ENCODE measurements at regions of chr12 and their contacts with region 1.

Region 1: GRCh38 chr12:64431791-64432190 is 20.1 kb upstream of the TBK1 start:
- DNase-seq: no peak
- ATAC-seq: no peak
- H3K4me3 ChIP-seq: no peak overlapping the region
- H3K27ac ChIP-seq: no peak overlapping the region
- H3K4me1 ChIP-seq: no peaks in the 10 kb centered on the region
- H3K27me3 ChIP-seq: no peaks in the 10 kb centered on the region
- CTCF ChIP-seq: no peak

Region 2: GRCh38 chr12:64373193-64373592 is 58.6 kb before region 1 on chr12:
- intact Hi-C with region 1: no loop called
- DNase-seq: no peak
- ATAC-seq: no peak
- H3K4me3 ChIP-seq: no peak overlapping the region
- H3K27ac ChIP-seq: no peak overlapping the region
- H3K4me1 ChIP-seq: no peaks in the 10 kb centered on the region
- H3K27me3 ChIP-seq: no peaks in the 10 kb centered on the region
- CTCF ChIP-seq: no peak

Region 3: DNA sequence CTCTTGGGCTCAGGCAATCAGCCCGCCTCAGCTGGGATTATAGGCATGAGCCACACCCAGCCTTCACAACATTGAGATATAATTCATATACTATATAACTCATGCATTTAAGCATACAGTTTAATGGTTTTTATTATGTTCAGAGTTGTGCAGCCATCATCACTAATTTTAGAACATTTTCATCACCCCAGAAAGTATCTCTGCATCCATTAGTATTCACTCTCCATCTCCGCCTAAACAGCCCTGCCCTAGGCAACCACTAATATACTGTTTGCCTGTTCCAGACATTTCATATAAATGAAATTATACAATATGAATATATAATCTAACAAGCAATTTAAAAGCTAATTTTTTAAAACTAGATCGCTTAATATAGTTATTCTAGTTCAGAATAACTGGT is 54.9 kb after region 1 on chr12:
- intact Hi-C with region 1: loop called in 1 of 2 experiments (anchors 5 kb)
- DNase-seq: no peak
- ATAC-seq: no peak
- H3K4me3 ChIP-seq: no peak overlapping the region
- H3K27ac ChIP-seq: no peak overlapping the region
- H3K4me1 ChIP-seq: no peaks in the 10 kb centered on the region
- H3K27me3 ChIP-seq: no peaks in the 10 kb centered on the region
- CTCF ChIP-seq: no peak

Region 4: GRCh38 chr12:64744422-64745258 is 312.8 kb after region 1 on chr12:
- intact Hi-C with region 1: loop called (anchors 10 kb)
- DNase-seq: no peak
- ATAC-seq: no peak
- H3K4me3 ChIP-seq: no peak overlapping the region
- H3K27ac ChIP-seq: no peak overlapping the region
- H3K4me1 ChIP-seq: no peaks in the 10 kb centered on the region
- H3K27me3 ChIP-seq: no peaks in the 10 kb centered on the region
- CTCF ChIP-seq: no peak

Measured in psoas muscle (tissue), 8 donors.